Psoas muscle (tissue), 8 donors: ENCODE measurements at regions of chr5 and their contacts with region 1.

Region 1: GRCh38 chr5:72507909-72508575 is 832 bp upstream of the ZNF366 start:
- DNase-seq: no peak
- ATAC-seq: no peak
- H3K4me3 ChIP-seq: peak overlapping the region; percentile 55
- H3K27ac ChIP-seq: peak overlapping the region; percentile 87
- H3K4me1 ChIP-seq: peaks cover 83% of the 10 kb centered on the region
- H3K27me3 ChIP-seq: no peaks in the 10 kb centered on the region
- CTCF ChIP-seq: no peak

Region 2: GRCh38 chr5:72465601-72466563 is 42.2 kb before region 1 on chr5:
- intact Hi-C with region 1: loop called in 1 of 2 experiments (anchors 5 kb)
- DNase-seq: no peak
- ATAC-seq: peak; percentile 32 to 69 (median 52)
- H3K4me3 ChIP-seq: no peak overlapping the region
- H3K27ac ChIP-seq: peak overlapping the region; percentile 84
- H3K4me1 ChIP-seq: peaks cover 51% of the 10 kb centered on the region
- H3K27me3 ChIP-seq: no peaks in the 10 kb centered on the region
- CTCF ChIP-seq: no peak